Activated T-helper 2 cell treated with anti-CD3 and anti-CD28 coated beads, Interferon-gamma antibody, Interleukin-2, Interleukin-4, amounts not matched to agents 10 μg/mL and 5 μg/mL and 100 μg/mL, durations not matched to agents 14 hours and 24 hours and 36 hours (primary cell): ENCODE measurements at regions of chr11 and their contacts with region 1.

Region 1: DNA sequence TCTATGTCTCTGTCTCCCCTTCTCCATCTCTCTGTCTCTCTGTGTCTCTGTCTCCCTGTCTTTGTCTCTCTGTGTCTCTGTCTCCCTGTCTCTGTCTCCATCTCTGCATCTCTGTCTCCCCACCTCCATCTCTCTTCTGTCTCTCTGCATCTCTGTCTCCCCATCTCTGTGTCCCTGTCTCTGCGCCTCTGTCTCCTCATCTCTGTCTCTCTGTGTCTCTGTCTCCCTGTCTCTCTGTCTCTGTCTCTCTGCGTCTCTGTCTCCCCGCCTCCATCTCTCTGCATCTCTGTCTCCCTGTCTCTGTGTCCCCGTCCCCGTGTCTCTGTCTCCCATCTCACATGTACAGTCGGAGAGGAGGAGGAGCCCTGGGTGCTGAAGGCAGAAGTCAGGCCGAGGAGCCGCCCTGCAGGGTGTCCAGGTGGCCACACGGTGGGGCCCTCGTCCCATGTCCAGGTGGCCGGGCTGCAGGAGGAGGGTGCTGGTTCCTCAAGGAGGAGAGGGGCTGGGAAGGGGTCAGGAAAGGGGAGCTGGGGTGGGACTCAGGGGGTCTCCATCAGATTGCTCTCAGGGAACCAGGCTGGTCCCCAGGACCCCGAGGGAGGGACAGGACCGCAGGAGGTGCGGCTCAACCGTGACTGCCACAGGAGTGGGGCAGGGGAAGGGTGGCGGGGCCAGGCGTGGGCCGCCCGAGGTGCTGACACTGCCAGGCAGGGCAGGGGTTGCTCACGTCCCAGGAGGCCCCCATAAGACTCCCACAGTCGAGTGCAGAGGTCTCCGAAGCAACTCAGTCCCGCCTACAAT is 25.6 kb upstream of the TH start:
- DNase-seq: peak; percentile 56
- H3K4me3 Mint-ChIP-seq: no peak overlapping the region
- H3K27ac Mint-ChIP-seq: no peak overlapping the region
- H3K4me1 Mint-ChIP-seq: peaks cover 3% of the 10 kb centered on the region
- H3K27me3 Mint-ChIP-seq: peaks cover 11% of the 10 kb centered on the region

Region 2: GRCh38 chr11:2223153-2223794 is 26.1 kb after region 1 on chr11:
- intact Hi-C with region 1: no loop called
- DNase-seq: no peak
- H3K4me3 Mint-ChIP-seq: no peak overlapping the region
- H3K27ac Mint-ChIP-seq: no peak overlapping the region
- H3K4me1 Mint-ChIP-seq: no peaks in the 10 kb centered on the region
- H3K27me3 Mint-ChIP-seq: peaks cover 35% of the 10 kb centered on the region

Region 3: DNA sequence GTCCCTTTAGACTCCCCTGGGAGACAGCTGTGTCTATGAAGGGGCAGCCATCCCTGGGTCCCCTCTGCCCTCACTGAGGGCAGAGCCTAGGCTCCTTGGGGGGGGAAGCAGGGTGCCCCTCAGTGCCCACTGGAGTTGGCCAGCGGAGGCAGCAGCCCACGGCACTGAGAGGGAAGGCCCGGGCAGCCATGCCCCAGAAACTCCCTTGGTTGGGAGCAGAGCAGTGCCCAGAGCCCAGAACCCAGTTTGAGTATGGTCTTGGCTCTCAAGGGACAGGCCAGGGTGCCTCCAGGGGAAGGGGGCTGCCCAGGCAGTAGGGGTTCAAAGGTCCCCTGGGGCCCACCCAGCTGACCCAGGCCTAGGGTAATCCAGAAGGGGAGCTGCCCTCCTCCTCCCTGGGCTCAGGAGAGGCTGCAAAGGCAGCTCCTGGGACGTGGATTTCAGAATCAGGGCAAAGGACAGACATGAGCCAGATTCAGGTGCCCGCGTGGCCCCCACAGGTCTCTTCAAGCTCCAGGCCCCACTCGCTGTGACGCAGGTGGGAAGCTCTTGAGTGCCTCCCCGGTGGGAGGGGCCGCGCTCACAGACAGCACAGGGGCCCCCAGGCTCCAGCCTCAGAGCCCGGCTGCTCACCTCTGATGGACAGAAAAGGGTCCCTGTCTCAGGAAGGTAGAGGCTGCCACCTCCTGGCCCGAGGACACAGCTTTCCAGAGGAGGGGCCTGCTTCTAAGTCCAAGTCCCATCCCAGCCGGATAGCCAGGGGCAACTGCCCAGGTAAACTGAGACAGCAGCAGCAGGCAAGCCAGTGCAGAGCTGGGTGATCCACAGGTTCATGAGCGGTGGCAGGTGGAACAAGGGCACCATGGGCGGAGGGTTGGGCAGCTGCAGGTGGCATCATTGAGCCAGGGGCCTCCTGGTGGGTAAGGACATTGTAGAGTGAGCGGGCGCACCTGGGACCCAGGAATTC is 101.9 kb after region 1 on chr11:
- intact Hi-C with region 1: loop called (anchors 1 kb)
- DNase-seq: peak; percentile 7
- H3K4me3 Mint-ChIP-seq: peak overlapping the region; percentile 39
- H3K27ac Mint-ChIP-seq: no peak overlapping the region
- H3K4me1 Mint-ChIP-seq: peaks cover 21% of the 10 kb centered on the region
- H3K27me3 Mint-ChIP-seq: no peaks in the 10 kb centered on the region

Region 4: DNA sequence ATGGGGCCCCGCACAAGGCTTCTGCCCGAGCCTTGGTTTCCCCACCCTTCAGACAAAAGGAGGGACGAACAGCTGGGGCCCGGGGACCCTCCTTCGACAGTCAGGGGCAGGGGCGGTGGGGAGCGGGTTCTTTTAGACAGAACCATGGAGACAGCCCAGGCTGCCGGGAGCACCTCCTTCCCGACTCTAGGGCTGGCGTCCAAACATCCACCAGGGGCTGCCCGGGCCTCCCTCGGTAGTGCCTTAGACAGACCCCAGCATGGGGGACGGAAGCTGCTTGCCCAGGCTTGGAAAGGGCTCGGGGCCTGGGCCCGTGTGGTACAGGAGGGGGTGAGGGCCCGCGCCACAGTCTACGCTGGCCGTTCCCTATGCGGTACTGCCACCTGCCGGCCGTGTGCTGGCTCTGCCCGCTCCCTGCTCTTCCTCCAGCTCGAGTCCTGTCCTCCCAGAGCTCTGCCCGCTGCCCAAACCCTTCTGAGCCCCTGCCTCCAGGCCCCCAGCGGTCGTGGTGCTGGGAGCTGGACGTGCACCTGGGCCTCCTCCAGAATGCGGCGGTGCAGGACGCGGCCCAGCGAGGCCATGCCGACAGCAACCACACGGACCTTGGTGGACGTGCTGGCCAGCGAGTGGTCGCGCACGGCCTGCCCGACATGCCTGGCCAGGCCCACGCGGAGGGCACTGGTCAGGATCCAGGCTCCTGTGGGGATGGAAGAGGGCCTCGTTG is 223.5 kb after region 1 on chr11:
- intact Hi-C with region 1: loop called (anchors 1 kb)
- DNase-seq: peak; percentile 58
- H3K4me3 Mint-ChIP-seq: no peak overlapping the region
- H3K27ac Mint-ChIP-seq: no peak overlapping the region
- H3K4me1 Mint-ChIP-seq: no peaks in the 10 kb centered on the region
- H3K27me3 Mint-ChIP-seq: no peaks in the 10 kb centered on the region